PC-9 (cell line): ENCODE measurements at regions of chr20 and their contacts with region 1.

Region 1: GRCh38 chr20:62603021-62603906 is 39.0 kb upstream of the SLCO4A1 start:
- DNase-seq: peak in 1 of 2 experiments; percentile 74
- H3K4me3 ChIP-seq: no peak overlapping the region
- H3K27ac ChIP-seq: no peak overlapping the region
- H3K4me1 ChIP-seq: peaks cover 22% of the 10 kb centered on the region
- H3K27me3 ChIP-seq: peaks cover 18% of the 10 kb centered on the region
- CTCF ChIP-seq: no peak

Region 2: GRCh38 chr20:62590301-62591121 is 12.8 kb before region 1 on chr20:
- CTCF ChIA-PET with region 1: no interaction called
- POLR2A ChIA-PET with region 1: no interaction called
- intact Hi-C with region 1: loop called (anchors 1 kb)
- DNase-seq: peak; percentile 56 to 84
- H3K4me3 ChIP-seq: no peak overlapping the region
- H3K27ac ChIP-seq: no peak overlapping the region
- H3K4me1 ChIP-seq: peaks cover 9% of the 10 kb centered on the region
- H3K27me3 ChIP-seq: peaks cover 42% of the 10 kb centered on the region
- CTCF ChIP-seq: no peak